Ovary (tissue), 10 donors: ENCODE measurements at regions of chrX and their contacts with region 1.

Region 1: DNA sequence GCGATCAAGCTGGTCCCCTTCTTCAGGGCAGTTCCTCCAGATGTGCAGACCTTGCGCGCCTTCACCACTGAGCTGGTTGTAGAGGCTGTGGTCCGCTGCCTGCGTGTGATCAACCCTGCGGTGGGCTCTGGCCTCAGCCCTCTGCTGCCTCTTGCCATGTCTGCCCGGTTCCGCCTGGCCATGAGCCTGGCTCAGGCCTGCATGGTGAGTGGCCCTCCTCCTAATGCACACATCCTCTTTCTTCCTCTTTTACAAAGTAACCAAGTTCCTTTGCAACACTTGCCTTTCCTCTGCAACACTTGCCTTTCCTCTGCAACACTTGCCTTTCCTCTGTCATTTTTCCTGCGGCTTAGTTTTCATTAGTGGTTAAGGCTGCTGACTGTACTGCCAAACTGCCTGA is 1.8 kb downstream of the CCDC22 start:
- DNase-seq: no peak
- H3K4me3 ChIP-seq: no peak overlapping the region
- H3K27ac ChIP-seq: no peak overlapping the region
- H3K4me1 ChIP-seq: no peaks in the 10 kb centered on the region
- H3K27me3 ChIP-seq: no peaks in the 10 kb centered on the region
- CTCF ChIP-seq: no peak
- EP300 ChIP-seq: no peak
- POLR2A ChIP-seq: no peak

Region 2: GRCh38 chrX:49221868-49222267 is 15.2 kb before region 1 on chrX:
- intact Hi-C with region 1: no loop called
- DNase-seq: no peak
- H3K4me3 ChIP-seq: no peak overlapping the region
- H3K27ac ChIP-seq: no peak overlapping the region
- H3K4me1 ChIP-seq: no peaks in the 10 kb centered on the region
- H3K27me3 ChIP-seq: no peaks in the 10 kb centered on the region
- CTCF ChIP-seq: no peak
- EP300 ChIP-seq: no peak
- POLR2A ChIP-seq: no peak

Region 3: DNA sequence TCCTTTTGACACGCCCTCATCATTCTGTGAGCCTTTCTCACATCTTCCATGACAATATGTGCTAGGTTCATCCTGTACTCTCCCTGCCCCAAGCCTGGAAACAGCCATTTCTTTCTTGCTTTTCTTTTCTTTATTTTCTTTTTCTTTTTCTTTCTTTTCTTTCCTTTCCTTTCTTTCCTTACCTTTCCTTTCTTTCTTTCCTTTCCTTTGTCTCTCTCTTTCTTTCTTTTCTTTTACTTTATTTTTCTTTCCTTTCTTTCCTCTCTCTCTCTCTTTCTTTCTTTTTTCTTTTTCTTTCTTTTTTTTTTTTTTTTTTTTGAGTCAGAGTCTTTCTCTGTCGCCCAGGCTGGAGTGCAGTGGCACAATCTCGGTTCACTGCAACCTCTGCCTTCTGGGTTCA is 47.2 kb after region 1 on chrX:
- intact Hi-C with region 1: loop called in 1 of 4 experiments (anchors 2 kb)
- DNase-seq: no peak
- H3K4me3 ChIP-seq: no peak overlapping the region
- H3K27ac ChIP-seq: no peak overlapping the region
- H3K4me1 ChIP-seq: peaks cover 3% of the 10 kb centered on the region
- H3K27me3 ChIP-seq: no peaks in the 10 kb centered on the region
- CTCF ChIP-seq: no peak
- EP300 ChIP-seq: no peak
- POLR2A ChIP-seq: no peak

Region 4: DNA sequence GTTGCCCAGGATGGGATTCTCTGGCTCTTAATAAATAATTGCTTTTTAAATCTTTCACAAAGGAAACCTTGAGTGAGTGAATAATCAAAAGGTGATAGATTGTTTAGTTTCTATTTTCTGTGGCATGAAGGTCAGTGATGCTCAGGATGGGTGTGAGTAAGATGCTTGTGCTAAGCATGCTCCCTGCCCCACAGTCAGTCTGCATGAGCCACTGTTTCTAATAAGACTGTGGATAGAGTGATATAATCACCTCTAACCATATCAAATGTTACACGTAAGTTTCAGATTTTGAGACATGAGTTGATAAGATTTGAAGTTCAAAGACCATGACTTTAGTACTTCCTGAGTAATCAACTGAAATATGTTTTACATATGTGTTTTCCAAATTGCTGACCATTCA is 63.6 kb after region 1 on chrX:
- intact Hi-C with region 1: no loop called
- DNase-seq: no peak
- H3K4me3 ChIP-seq: no peak overlapping the region
- H3K27ac ChIP-seq: no peak overlapping the region
- H3K4me1 ChIP-seq: no peaks in the 10 kb centered on the region
- H3K27me3 ChIP-seq: no peaks in the 10 kb centered on the region
- CTCF ChIP-seq: no peak
- EP300 ChIP-seq: no peak
- POLR2A ChIP-seq: no peak